ENCODE measurements at regions of chr2 and their contacts with region 1.

Region 1: GRCh38 chr2:164464376-164464775 is 156.9 kb downstream of the GRB14 start:
- DNase-seq: no peak
- ATAC-seq: no peak
- H3K4me3 ChIP-seq: no peak overlapping the region
- H3K4me3 Mint-ChIP-seq: no peak overlapping the region
- H3K27ac ChIP-seq: no peak overlapping the region
- H3K27ac Mint-ChIP-seq: no peak overlapping the region
- H3K4me1 ChIP-seq: no peaks in the 10 kb centered on the region
- H3K4me1 Mint-ChIP-seq: no peaks in the 10 kb centered on the region
- H3K27me3 ChIP-seq: no peaks in the 10 kb centered on the region
- H3K27me3 Mint-ChIP-seq: no peaks in the 10 kb centered on the region
- CTCF ChIP-seq: no peak

Region 2: GRCh38 chr2:164449706-164450105 is 14.7 kb before region 1 on chr2:
- CTCF ChIA-PET with region 1: no interaction called
- POLR2A ChIA-PET with region 1: no interaction called
- intact Hi-C with region 1: no loop called
- DNase-seq: no peak
- ATAC-seq: no peak
- H3K4me3 ChIP-seq: no peak overlapping the region
- H3K4me3 Mint-ChIP-seq: no peak overlapping the region
- H3K27ac ChIP-seq: no peak overlapping the region
- H3K27ac Mint-ChIP-seq: no peak overlapping the region
- H3K4me1 ChIP-seq: no peaks in the 10 kb centered on the region
- H3K4me1 Mint-ChIP-seq: no peaks in the 10 kb centered on the region
- H3K27me3 ChIP-seq: no peaks in the 10 kb centered on the region
- H3K27me3 Mint-ChIP-seq: no peaks in the 10 kb centered on the region
- CTCF ChIP-seq: no peak

Region 3: DNA sequence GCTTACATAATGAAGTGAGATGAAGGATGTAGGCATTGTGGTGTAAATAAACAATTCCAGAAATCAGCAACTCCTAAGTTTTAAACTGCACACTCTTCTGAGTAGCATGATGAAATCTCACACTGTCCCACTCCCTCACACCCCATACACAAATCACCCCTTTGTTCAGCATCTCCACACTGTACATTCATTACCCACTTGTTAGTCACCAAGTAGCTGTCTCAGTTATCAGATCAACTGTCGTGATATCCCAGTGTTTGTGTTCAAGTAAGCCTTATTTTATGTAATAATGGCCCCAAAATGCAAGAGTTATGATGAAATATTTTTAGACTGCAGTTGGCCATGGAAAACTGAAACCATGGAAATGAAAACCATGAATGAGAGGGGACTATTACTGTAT is 21.2 kb after region 1 on chr2:
- CTCF ChIA-PET with region 1: no interaction called
- POLR2A ChIA-PET with region 1: no interaction called
- intact Hi-C with region 1: loop called in 1 of 2 experiments (anchors 2 kb)
- DNase-seq: no peak
- ATAC-seq: no peak
- H3K4me3 ChIP-seq: no peak overlapping the region
- H3K4me3 Mint-ChIP-seq: no peak overlapping the region
- H3K27ac ChIP-seq: no peak overlapping the region
- H3K27ac Mint-ChIP-seq: no peak overlapping the region
- H3K4me1 ChIP-seq: no peaks in the 10 kb centered on the region
- H3K4me1 Mint-ChIP-seq: no peaks in the 10 kb centered on the region
- H3K27me3 ChIP-seq: no peaks in the 10 kb centered on the region
- H3K27me3 Mint-ChIP-seq: no peaks in the 10 kb centered on the region
- CTCF ChIP-seq: no peak

Measured in CD8-positive, alpha-beta T cell (primary cell).